CD8-positive, alpha-beta memory T cell (primary cell): ENCODE measurements at regions of chr20 and their contacts with region 1.

Region 1: DNA sequence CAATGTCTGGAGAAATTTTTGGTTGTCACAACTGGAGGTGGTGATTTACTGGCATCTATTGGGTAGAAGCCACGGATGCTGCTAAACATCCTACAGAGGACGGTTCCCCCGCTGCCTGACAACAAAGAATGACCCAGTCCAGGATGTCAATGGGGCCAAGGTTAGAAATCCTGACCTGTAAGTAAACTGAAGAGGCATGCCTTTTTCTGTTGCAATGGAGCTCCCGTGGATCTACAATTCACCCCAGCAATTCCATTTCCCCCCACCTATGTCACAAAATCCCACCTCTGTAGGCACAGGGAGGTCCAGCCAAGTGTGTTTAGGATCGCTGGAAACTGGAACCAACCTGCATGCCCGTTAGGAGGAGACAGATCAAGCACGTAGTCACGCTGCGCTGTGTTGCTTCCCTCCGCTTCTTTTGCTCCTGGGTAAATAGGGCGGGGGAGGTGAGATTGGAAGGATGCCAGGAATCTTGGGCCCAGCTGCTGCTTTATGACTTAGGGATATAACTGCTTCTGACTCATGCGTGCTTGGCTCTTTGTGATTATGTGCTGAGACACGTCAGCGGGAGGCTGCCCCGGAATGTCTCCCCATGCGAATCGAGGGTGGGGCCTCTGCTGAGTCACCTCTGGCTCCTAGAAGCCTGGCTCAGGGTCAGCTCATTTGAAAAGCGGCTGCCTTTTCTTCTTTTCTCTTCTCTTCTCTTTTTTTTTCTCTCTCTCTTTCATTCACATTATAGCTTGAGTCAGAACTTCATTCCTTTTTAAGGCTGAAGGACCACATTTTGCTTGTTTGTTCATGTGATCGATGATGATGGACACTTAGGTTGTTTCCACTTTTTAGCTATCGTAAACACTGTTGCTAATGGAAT is 12.4 kb upstream of the PEDS1 start:
- DNase-seq: peak; percentile 22 to 82 (median 32)
- H3K4me3 ChIP-seq: peak overlapping the region; percentile 20
- H3K4me3 Mint-ChIP-seq: peak overlapping the region in 6 of 7 donors; percentile 29 to 53 (median 48)
- H3K27ac ChIP-seq: peak overlapping the region; percentile 70
- H3K27ac Mint-ChIP-seq: peak overlapping the region in 2 of 8 donors; percentile 34 to 84
- H3K4me1 ChIP-seq: peaks cover 4% of the 10 kb centered on the region
- H3K4me1 Mint-ChIP-seq: peaks cover 6 to 13% (median 8%) of the 10 kb centered on the region in 3 donors
- H3K27me3 ChIP-seq: no peaks in the 10 kb centered on the region
- H3K27me3 Mint-ChIP-seq: peaks cover 2 to 8% of the 10 kb centered on the region in 2 donors

Region 2: DNA sequence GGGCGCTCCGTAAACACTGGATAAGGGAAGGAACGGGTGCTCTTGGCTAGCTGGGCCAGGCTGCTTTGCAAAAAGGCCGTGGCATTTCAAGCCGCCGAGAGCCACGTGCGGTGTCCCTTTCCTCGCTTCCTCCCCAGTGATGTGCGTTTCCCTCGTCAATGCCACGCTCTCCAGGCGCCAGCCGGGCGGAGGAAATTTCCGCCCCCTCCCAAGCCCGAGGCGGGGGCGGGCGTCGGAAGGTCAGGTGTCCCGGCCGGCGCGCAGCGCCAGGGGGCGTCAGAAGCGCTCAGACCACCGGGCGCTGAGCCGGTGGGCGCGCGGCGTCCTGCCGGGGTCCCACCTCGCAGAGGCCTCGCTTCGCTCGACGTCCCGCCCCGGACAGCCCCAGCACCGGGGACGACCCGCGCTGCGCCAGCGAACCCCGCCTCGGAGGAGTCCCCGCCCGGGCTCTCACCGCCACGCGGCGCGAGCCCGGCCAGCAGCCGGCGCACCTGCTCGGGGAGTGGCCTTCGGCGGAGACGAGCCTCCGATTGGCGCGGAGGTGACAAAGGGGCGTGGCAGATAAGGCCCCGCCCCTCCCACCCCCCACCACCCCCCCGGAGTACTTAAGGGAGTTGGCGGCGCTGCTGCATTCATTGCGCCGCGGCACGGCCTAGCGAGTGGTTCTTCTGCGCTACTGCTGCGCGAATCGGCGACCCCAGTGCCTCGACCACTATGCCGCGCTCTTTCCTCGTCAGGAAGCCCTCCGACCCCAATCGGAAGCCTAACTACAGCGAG is 183.4 kb before region 1 on chr20 and contains the start of gene SNAI1:
- CTCF ChIA-PET with region 1: interaction called, 27 read pairs
- POLR2A ChIA-PET with region 1: no interaction called
- DNase-seq: peak; percentile 75 to 92 (median 80)
- H3K4me3 ChIP-seq: peak within 1 kb of the TSS; percentile 67
- H3K4me3 Mint-ChIP-seq: peak within 1 kb of the TSS; percentile 66 to 78 (median 74)
- H3K27ac ChIP-seq: peak within 1 kb of the TSS; percentile 67
- H3K27ac Mint-ChIP-seq: peak within 1 kb of the TSS in 7 of 8 donors; percentile 43 to 97 (median 80)
- H3K4me1 ChIP-seq: peaks cover 24% of the 10 kb centered on the region
- H3K4me1 Mint-ChIP-seq: peaks cover 18 to 39% (median 26%) of the 10 kb centered on the region in 3 donors
- H3K27me3 ChIP-seq: no peaks in the 10 kb centered on the region
- H3K27me3 Mint-ChIP-seq: peaks cover 2 to 3% of the 10 kb centered on the region in 2 donors
- total RNA-seq, gene SNAI1: 0.42 to 0.49 TPM

Region 3: DNA sequence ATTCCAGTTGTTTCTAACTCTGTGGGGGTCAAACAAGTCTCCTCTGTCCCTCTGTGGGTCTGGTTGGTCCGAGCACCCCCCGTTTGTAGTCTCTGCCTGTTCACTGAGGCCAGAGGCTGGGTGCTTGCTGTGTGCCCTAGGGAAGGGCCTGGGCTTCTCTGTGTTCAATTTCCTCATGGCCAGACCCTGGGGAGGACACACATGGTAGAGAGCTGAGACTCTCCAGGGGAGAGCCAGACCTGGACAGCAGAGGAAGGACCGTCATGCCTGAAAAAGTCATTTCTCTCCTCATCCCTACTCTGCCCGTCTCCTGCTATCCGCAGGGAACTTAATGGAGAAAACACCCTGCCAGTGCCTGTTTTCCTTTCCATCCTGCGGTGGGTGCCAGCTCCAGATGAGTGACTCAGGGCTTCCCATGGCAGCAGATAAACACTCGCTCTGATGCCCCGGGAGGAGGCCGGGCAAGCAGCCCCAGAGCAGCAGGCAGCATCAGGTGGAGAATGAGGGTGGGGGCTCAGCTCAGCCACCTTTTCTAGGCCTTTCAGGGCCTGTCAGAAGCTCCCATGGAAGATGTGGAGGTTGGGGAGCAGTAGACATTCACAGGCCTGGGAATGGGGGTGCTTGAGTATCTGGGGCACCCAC is 131.2 kb before region 1 on chr20:
- CTCF ChIA-PET with region 1: no interaction called
- POLR2A ChIA-PET with region 1: no interaction called
- DNase-seq: no peak
- H3K4me3 ChIP-seq: no peak overlapping the region
- H3K4me3 Mint-ChIP-seq: no peak overlapping the region
- H3K27ac ChIP-seq: no peak overlapping the region
- H3K27ac Mint-ChIP-seq: no peak overlapping the region
- H3K4me1 ChIP-seq: no peaks in the 10 kb centered on the region
- H3K4me1 Mint-ChIP-seq: no peaks in the 10 kb centered on the region
- H3K27me3 ChIP-seq: no peaks in the 10 kb centered on the region
- H3K27me3 Mint-ChIP-seq: peaks cover 3 to 4% of the 10 kb centered on the region in 2 donors

Region 4: DNA sequence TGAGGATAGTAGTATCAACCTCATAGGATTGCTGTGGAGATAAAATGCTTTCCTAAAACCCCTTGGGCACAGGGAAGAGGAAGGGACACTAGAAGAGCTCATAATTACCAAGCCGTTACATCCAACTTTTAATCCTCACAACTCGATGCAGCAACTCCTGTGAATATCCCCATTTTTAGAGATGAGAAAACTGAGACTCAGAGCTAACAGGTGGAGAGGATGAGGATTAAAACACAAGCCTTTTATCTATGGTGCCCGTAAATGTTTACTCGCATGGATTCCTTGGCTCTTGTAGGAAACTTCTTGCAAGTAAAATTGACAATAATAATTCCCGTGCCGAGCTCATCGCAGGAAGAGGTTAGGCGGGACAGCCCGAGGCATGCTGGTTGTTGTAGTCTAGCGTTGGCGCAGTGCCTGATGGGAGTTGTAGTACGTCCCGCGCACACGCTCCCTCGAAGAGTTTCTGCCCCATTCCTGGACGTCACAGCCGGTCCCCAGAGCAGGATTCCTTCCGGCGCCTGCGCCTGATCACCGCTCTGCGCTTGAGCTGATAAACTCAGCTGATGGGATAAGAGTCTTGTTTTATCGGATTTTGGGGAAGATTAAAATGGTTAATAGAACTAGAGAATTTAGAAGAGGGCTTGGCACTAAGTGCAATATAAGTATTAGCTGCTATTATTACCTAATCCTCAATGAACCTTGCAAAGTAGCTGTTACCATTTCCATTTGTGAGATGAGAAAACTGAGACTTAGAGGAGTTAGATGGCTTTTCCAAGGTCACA is 50.1 kb before region 1 on chr20:
- CTCF ChIA-PET with region 1: interaction called, 203 read pairs
- POLR2A ChIA-PET with region 1: interaction called, 9 read pairs
- DNase-seq: peak; percentile 84 to 92 (median 86)
- H3K4me3 ChIP-seq: peak overlapping the region; percentile 82
- H3K4me3 Mint-ChIP-seq: peak overlapping the region; percentile 77 to 93 (median 84)
- H3K27ac ChIP-seq: peak overlapping the region; percentile 49
- H3K27ac Mint-ChIP-seq: peak overlapping the region; percentile 71 to 97 (median 94)
- H3K4me1 ChIP-seq: peaks cover 44% of the 10 kb centered on the region
- H3K4me1 Mint-ChIP-seq: peaks cover 46 to 57% (median 50%) of the 10 kb centered on the region in 3 donors
- H3K27me3 ChIP-seq: no peaks in the 10 kb centered on the region
- H3K27me3 Mint-ChIP-seq: no peaks in the 10 kb centered on the region

Region 5: DNA sequence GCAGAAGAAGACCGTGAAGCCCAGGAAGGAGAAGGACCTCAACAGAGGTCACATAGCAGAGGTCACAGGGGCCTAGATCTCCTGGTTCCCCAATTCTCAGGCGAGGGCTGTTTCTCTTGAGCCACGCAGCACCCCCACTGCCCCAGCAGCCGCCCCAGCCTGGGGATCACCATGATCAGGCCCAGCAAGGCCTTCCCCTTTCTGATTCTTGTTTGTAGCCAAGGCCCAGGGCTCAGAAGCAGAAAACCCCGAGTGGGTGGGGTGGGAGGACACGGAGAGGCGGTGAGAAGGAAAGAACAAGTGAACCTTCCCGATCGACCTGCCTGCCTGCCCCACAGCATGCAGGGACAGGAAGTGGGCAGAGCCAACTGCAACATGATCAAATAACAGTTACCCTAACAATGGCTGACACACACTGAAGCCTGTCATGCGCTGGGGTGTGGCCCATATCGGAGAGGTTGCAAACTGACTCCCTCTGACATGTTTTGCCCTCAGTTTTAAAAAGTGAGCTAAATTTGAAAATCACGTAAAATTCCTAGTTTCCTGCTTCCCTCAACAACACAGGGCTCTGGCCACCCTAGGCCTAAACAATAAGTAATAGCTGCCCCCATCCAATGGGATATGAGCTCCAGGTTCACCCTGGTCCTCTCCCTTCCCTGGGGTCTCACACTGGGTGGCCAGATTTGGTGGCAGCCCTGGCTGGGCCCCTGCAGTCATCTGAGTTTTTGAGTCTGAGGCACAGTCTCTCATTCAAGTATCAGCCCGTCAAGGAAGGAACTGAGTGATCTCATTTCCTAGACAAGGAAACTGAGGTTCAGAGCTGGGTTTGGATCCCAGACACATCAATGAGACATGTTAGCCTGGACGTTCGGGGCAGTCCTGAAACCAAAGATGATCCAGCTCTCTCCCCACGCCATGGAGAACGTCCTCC is 18.9 kb before region 1 on chr20:
- CTCF ChIA-PET with region 1: interaction called, 48 read pairs
- POLR2A ChIA-PET with region 1: interaction called, 4 read pairs
- DNase-seq: peak; percentile 55 to 85 (median 78)
- H3K4me3 ChIP-seq: peak overlapping the region; percentile 60
- H3K4me3 Mint-ChIP-seq: peak overlapping the region; percentile 73 to 92 (median 85)
- H3K27ac ChIP-seq: peak overlapping the region; percentile 66
- H3K27ac Mint-ChIP-seq: peak overlapping the region; percentile 94 to 98 (median 96)
- H3K4me1 ChIP-seq: peaks cover 38% of the 10 kb centered on the region
- H3K4me1 Mint-ChIP-seq: peaks cover 62 to 77% (median 68%) of the 10 kb centered on the region in 3 donors
- H3K27me3 ChIP-seq: no peaks in the 10 kb centered on the region
- H3K27me3 Mint-ChIP-seq: peaks cover 0 to 2% of the 10 kb centered on the region in 2 donors

Region 6: DNA sequence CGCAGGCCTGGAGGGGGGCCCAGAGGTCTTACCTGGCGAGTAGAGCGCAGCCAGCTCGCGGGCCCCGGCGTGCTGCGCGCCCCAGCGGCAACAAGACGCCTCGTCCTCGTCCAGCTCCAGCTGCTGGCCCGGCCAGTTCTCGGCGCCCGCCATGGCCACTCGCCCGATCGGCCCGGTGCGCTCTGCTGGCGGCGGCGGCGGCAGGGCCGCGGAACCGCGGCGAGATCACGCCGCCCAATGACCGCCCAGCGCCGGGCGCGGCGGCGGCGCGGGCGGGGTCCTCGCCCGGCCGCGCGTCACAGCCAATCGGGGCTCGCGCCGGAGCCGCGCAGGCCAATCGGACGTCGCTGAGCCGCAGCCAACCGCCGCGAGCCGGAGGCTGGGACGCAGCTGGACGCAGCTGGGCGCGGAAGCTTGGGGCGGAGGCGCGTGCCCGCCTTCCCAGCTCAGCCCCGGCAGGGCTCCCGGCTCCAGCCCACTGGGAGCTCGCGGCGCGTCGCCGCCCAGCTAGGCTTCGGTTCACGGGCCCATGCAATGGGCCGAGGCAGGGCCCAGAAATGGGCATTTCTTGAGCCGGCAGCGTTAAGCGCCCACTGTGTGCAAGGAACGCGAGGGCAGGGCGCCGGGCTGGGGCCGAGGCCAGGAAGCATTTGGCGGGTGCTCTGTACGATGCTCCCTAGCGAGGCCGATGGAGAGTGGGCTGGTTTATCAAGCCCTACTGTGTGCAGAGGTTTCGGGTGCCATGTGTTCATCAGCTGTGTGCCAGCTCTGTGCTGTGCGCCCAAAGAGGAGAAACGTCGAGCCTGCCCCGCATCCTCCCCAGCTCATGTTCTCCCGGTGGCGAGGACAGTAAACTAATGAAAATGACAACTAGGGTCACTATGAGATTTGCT is 12.2 kb before region 1 on chr20 and contains the start of gene PEDS1:
- CTCF ChIA-PET with region 1: interaction called, 48 read pairs
- POLR2A ChIA-PET with region 1: interaction called, 4 read pairs
- DNase-seq: peak; percentile 77 to 86 (median 82)
- H3K4me3 ChIP-seq: peak within 1 kb of the TSS; percentile 91
- H3K4me3 Mint-ChIP-seq: peak within 1 kb of the TSS; percentile 83 to 94 (median 86)
- H3K27ac ChIP-seq: peak within 1 kb of the TSS; percentile 89
- H3K27ac Mint-ChIP-seq: peak within 1 kb of the TSS; percentile 81 to 97 (median 93)
- H3K4me1 ChIP-seq: peaks cover 26% of the 10 kb centered on the region
- H3K4me1 Mint-ChIP-seq: peaks cover 41 to 52% (median 50%) of the 10 kb centered on the region in 3 donors
- H3K27me3 ChIP-seq: no peaks in the 10 kb centered on the region
- H3K27me3 Mint-ChIP-seq: no peaks in the 10 kb centered on the region
- total RNA-seq, gene PEDS1: 20.2 to 23.6 TPM

Region 7: GRCh38 chr20:50267041-50267865 is 101.3 kb after region 1 on chr20:
- CTCF ChIA-PET with region 1: no interaction called
- POLR2A ChIA-PET with region 1: no interaction called
- DNase-seq: no peak
- H3K4me3 ChIP-seq: no peak overlapping the region
- H3K4me3 Mint-ChIP-seq: no peak overlapping the region
- H3K27ac ChIP-seq: no peak overlapping the region
- H3K27ac Mint-ChIP-seq: no peak overlapping the region
- H3K4me1 ChIP-seq: no peaks in the 10 kb centered on the region
- H3K4me1 Mint-ChIP-seq: no peaks in the 10 kb centered on the region
- H3K27me3 ChIP-seq: no peaks in the 10 kb centered on the region
- H3K27me3 Mint-ChIP-seq: peaks cover 12 to 21% of the 10 kb centered on the region in 2 donors

Region 8: DNA sequence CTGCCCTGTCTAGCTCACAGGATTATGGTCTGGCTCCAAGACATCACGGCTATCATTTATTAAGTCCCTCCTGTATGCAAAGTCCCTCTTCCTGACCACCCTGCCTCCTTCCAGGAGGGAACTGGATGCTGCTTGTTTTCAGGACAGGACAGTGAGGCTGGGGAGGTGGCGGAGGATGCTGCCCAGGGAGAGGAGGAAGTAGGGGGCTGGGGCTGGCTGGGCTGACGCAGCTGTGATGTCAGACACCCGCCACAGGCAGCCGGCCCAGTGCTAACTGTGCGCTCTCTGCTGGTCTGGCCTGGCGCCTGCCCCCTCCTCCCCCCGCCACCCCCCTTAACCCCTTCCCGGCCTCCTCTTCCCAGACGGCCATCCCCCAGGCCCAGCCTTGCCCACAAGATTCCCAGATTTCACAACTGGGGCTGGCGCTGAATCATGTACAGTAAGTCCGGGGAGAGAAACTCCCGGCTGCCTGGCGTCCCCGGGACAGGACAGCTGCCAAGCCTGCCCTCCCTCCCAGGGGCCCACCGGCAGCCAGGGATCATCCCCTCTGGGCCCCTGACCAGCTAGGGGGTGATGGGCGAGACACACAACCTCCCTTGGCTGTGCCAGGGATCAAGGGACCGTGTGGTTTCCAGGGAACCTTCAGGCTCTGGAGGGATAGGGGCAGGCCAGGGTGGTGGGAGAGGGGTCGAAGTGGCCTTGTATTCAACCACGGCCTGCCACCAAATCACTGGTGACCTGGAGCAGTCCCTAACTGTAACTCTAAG is 142.8 kb after region 1 on chr20:
- CTCF ChIA-PET with region 1: no interaction called
- POLR2A ChIA-PET with region 1: no interaction called
- DNase-seq: no peak
- H3K4me3 ChIP-seq: no peak overlapping the region
- H3K4me3 Mint-ChIP-seq: no peak overlapping the region
- H3K27ac ChIP-seq: no peak overlapping the region
- H3K27ac Mint-ChIP-seq: no peak overlapping the region
- H3K4me1 ChIP-seq: no peaks in the 10 kb centered on the region
- H3K4me1 Mint-ChIP-seq: no peaks in the 10 kb centered on the region
- H3K27me3 ChIP-seq: no peaks in the 10 kb centered on the region
- H3K27me3 Mint-ChIP-seq: peaks cover 0 to 15% of the 10 kb centered on the region in 2 donors

Region 9: GRCh38 chr20:50360029-50360672 is 194.2 kb after region 1 on chr20:
- CTCF ChIA-PET with region 1: no interaction called
- POLR2A ChIA-PET with region 1: no interaction called
- DNase-seq: no peak
- H3K4me3 ChIP-seq: no peak overlapping the region
- H3K4me3 Mint-ChIP-seq: no peak overlapping the region
- H3K27ac ChIP-seq: no peak overlapping the region
- H3K27ac Mint-ChIP-seq: no peak overlapping the region
- H3K4me1 ChIP-seq: no peaks in the 10 kb centered on the region
- H3K4me1 Mint-ChIP-seq: no peaks in the 10 kb centered on the region
- H3K27me3 ChIP-seq: no peaks in the 10 kb centered on the region
- H3K27me3 Mint-ChIP-seq: peaks cover 0 to 3% of the 10 kb centered on the region in 2 donors